Endothelial cell of umbilical vein (primary cell): ENCODE measurements at regions of chr16 and their contacts with region 1.

Region 1: GRCh38 chr16:87636072-87636684 is 33.9 kb downstream of the JPH3 start:
- DNase-seq: peak; percentile 61
- H3K4me3 ChIP-seq: no peak overlapping the region
- H3K27ac ChIP-seq: no peak overlapping the region
- H3K4me1 ChIP-seq: no peaks in the 10 kb centered on the region
- H3K27me3 ChIP-seq: peaks cover 2% of the 10 kb centered on the region in 2 experiments
- CTCF ChIP-seq: peak; percentile 56 to 71
- POLR2A ChIP-seq: no peak

Region 2: GRCh38 chr16:87316923-87317749 is 319.0 kb before region 1 on chr16 and contains the start of gene C16orf95:
- CTCF ChIA-PET with region 1: interaction called, 9 read pairs
- POLR2A ChIA-PET with region 1: no interaction called
- dilution Hi-C with region 1: no loop called
- intact Hi-C with region 1: loop called (anchors 5 kb)
- DNase-seq: peak; percentile 95
- H3K4me3 ChIP-seq: peak within 1 kb of the TSS; percentile 91 to 99 (median 94)
- H3K27ac ChIP-seq: peak within 1 kb of the TSS; percentile 84
- H3K4me1 ChIP-seq: peaks cover 7% of the 10 kb centered on the region
- H3K27me3 ChIP-seq: no peaks in the 10 kb centered on the region
- CTCF ChIP-seq: peak; percentile 41 to 60
- POLR2A ChIP-seq: peak; percentile 82
- total RNA-seq, gene C16orf95: 4.8 and 6.6 TPM in 2 replicates

Region 3: DNA sequence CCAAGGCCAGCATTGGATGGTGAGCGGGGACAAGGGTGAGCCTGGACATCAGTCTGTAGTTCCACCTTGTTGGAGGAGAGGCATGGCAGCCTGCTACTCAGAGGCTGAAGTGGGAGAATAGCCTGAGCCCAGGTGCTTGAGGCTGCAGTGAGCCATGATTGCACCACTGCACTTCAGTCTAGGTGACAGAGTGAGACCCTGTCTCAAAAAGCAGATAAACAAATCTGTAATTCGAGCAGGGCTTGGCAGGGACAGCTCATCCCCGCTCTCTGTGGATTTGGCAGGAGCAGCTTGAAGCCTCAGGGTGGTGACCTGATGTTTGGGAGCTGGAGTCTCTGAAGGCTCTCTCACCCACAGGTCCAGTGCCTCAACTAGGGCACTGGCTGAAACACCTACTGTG is 104.8 kb before region 1 on chr16:
- CTCF ChIA-PET with region 1: no interaction called
- POLR2A ChIA-PET with region 1: no interaction called
- dilution Hi-C with region 1: no loop called
- intact Hi-C with region 1: no loop called
- DNase-seq: no peak
- H3K4me3 ChIP-seq: no peak overlapping the region
- H3K27ac ChIP-seq: no peak overlapping the region
- H3K4me1 ChIP-seq: peaks cover 3% of the 10 kb centered on the region
- H3K27me3 ChIP-seq: peaks cover 0 to 2% of the 10 kb centered on the region in 2 experiments
- CTCF ChIP-seq: no peak
- POLR2A ChIP-seq: no peak

Region 4: DNA sequence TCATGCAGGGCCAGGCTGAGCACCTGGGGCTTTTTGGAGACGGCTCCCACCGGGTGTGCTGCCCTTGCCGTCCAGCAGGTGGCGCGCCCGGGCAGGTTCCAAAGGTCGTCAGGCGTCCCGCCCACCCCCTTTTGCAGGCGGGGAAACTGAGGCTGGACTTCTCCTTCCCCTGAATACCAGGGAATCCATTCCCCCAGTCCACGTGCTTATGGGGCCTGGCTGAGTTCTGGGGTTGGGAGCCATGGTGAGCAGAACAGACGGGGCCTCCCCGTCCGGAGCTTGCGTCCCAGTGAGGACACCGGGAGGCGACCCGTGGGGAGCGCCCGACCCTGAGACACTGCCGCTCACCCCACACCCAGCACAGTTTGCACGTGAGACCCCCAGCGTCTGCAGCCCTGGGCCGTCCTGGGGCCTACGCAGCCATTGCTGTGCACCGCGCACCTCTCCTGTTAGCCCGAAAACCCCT is 85.6 kb before region 1 on chr16:
- CTCF ChIA-PET with region 1: interaction called, 8 read pairs
- POLR2A ChIA-PET with region 1: no interaction called
- dilution Hi-C with region 1: no loop called
- intact Hi-C with region 1: loop called (anchors 1 kb)
- DNase-seq: no peak
- H3K4me3 ChIP-seq: no peak overlapping the region
- H3K27ac ChIP-seq: no peak overlapping the region
- H3K4me1 ChIP-seq: no peaks in the 10 kb centered on the region
- H3K27me3 ChIP-seq: peaks cover 0 to 2% of the 10 kb centered on the region in 2 experiments
- CTCF ChIP-seq: peak; percentile 89 to 95
- POLR2A ChIP-seq: no peak

Region 5: GRCh38 chr16:87587636-87588035 is 48.5 kb before region 1 on chr16:
- CTCF ChIA-PET with region 1: interaction called, 145 read pairs
- POLR2A ChIA-PET with region 1: no interaction called
- dilution Hi-C with region 1: no loop called
- intact Hi-C with region 1: loop called (anchors 1 kb)
- DNase-seq: no peak
- H3K4me3 ChIP-seq: no peak overlapping the region
- H3K27ac ChIP-seq: no peak overlapping the region
- H3K4me1 ChIP-seq: peaks cover 14% of the 10 kb centered on the region
- H3K27me3 ChIP-seq: peaks cover 2 to 3% of the 10 kb centered on the region in 2 experiments
- CTCF ChIP-seq: no peak
- POLR2A ChIP-seq: no peak

Region 6: DNA sequence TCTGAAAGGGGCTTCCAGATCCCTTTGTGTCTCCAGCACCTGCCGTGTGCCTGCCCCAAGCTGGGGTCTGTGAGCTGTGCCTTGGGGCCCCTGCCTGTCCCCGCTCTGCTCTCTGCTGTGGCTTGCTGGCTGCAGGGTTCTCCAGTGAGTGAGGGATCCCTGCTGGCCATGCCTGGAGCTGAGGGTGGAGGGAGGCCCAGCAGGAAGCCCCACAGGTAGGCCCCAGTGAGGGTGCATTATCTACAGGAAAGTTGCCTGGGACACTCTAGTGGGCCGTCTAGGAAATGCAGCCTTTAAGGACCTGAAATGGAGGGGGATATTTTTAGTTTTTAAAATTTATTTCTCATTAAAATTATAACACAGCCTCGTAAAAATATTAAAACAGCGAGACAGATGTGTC is 17.1 kb after region 1 on chr16:
- CTCF ChIA-PET with region 1: interaction called, 10 read pairs
- POLR2A ChIA-PET with region 1: no interaction called
- dilution Hi-C with region 1: no loop called
- intact Hi-C with region 1: no loop called
- DNase-seq: no peak
- H3K4me3 ChIP-seq: no peak overlapping the region
- H3K27ac ChIP-seq: no peak overlapping the region
- H3K4me1 ChIP-seq: no peaks in the 10 kb centered on the region
- H3K27me3 ChIP-seq: peaks cover 0 to 3% of the 10 kb centered on the region in 2 experiments
- CTCF ChIP-seq: peak in 1 of 2 donors; percentile 27
- POLR2A ChIP-seq: no peak